Activated B cell treated with CpG ODN at 0.5 μM for 24 hours (primary cell): ENCODE measurements at regions of chrX and their contacts with region 1.

Region 1: GRCh38 chrX:119222932-119223331 is 13.2 kb upstream of the PGRMC1 start:
- DNase-seq: no peak
- ATAC-seq: no peak
- H3K4me3 Mint-ChIP-seq: no peak overlapping the region
- H3K27ac Mint-ChIP-seq: no peak overlapping the region
- H3K4me1 Mint-ChIP-seq: no peaks in the 10 kb centered on the region
- H3K27me3 Mint-ChIP-seq: peaks cover 11% of the 10 kb centered on the region
- CTCF ChIP-seq: no peak

Region 2: DNA sequence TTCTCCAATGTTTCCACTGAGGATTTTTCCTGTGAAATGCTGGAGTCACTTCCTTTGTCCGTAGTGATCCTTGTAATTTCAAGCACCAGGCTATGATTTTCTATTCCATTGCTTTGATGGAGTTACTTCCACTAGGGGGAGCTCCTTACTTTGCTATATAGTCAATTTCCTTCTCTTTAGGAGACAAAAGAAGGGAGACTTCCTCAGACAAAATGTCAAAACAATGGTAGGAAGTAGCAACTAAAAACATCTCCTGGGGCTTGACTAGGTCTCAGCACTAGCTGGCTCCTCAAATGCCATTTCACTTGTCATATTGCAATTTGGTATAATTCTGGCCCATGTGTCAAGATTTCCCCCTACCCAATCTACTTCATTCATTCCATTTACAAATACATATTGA is 375.3 kb before region 1 on chrX:
- CTCF ChIA-PET with region 1: no interaction called
- POLR2A ChIA-PET with region 1: no interaction called
- intact Hi-C with region 1: loop called (anchors 1 kb)
- DNase-seq: no peak
- ATAC-seq: no peak
- H3K4me3 Mint-ChIP-seq: no peak overlapping the region
- H3K27ac Mint-ChIP-seq: no peak overlapping the region
- H3K4me1 Mint-ChIP-seq: no peaks in the 10 kb centered on the region
- H3K27me3 Mint-ChIP-seq: no peaks in the 10 kb centered on the region
- CTCF ChIP-seq: no peak

Region 3: DNA sequence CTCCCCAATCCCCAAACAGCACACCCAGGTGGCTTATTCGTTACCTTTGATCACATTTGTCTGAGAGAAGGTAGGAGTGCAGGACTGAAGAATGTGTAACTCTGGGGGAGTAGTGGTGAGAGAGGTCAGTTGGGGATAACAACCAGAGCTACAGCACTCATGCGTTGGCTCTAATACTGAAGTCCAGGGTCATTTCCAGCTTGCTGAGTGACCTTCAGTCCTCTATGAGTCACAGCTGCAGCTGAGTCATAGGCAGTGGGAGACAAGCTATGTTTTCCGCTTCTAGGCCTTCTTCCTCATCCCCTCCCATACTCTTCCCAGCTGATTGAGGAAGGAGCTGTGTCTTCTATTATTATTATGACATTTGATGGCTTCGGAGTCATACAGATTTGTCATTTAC is 181.8 kb before region 1 on chrX:
- CTCF ChIA-PET with region 1: no interaction called
- POLR2A ChIA-PET with region 1: no interaction called
- intact Hi-C with region 1: no loop called
- DNase-seq: no peak
- ATAC-seq: no peak
- H3K4me3 Mint-ChIP-seq: no peak overlapping the region
- H3K27ac Mint-ChIP-seq: no peak overlapping the region
- H3K4me1 Mint-ChIP-seq: no peaks in the 10 kb centered on the region
- H3K27me3 Mint-ChIP-seq: peaks cover 2% of the 10 kb centered on the region
- CTCF ChIP-seq: no peak

Region 4: GRCh38 chrX:119118780-119119395 is 104.0 kb before region 1 on chrX:
- CTCF ChIA-PET with region 1: no interaction called
- POLR2A ChIA-PET with region 1: no interaction called
- intact Hi-C with region 1: loop called (anchors 2 kb)
- DNase-seq: peak; percentile 14
- ATAC-seq: peak; percentile 86
- H3K4me3 Mint-ChIP-seq: no peak overlapping the region
- H3K27ac Mint-ChIP-seq: no peak overlapping the region
- H3K4me1 Mint-ChIP-seq: no peaks in the 10 kb centered on the region
- H3K27me3 Mint-ChIP-seq: peaks cover 2% of the 10 kb centered on the region
- CTCF ChIP-seq: no peak

Region 5: GRCh38 chrX:119235872-119236622 is 13.1 kb after region 1 on chrX and contains the start of gene PGRMC1:
- CTCF ChIA-PET with region 1: no interaction called
- POLR2A ChIA-PET with region 1: no interaction called
- intact Hi-C with region 1: no loop called
- DNase-seq: peak; percentile 64
- ATAC-seq: peak; percentile 97
- H3K4me3 Mint-ChIP-seq: peak within 1 kb of the TSS; percentile 89
- H3K27ac Mint-ChIP-seq: peak within 1 kb of the TSS; percentile 82
- H3K4me1 Mint-ChIP-seq: peaks cover 16% of the 10 kb centered on the region
- H3K27me3 Mint-ChIP-seq: no peaks in the 10 kb centered on the region
- CTCF ChIP-seq: no peak
- total RNA-seq, gene PGRMC1: 8.5 and 9.8 TPM in 2 replicates